CD8-positive, alpha-beta T cell (primary cell): ENCODE measurements at regions of chr14 and their contacts with region 1.

Region 1: GRCh38 chr14:21978184-21978998 is 304.8 kb upstream of the OR4E1 start:
- DNase-seq: peak in 8 of 9 experiments; percentile 26 to 78 (median 58)
- ATAC-seq: peak; percentile 79
- H3K4me3 ChIP-seq: peak overlapping the region in 1 of 2 experiments; percentile 15
- H3K4me3 Mint-ChIP-seq: peak overlapping the region; percentile 71
- H3K27ac ChIP-seq: no peak overlapping the region
- H3K27ac Mint-ChIP-seq: peak overlapping the region; percentile 72
- H3K4me1 ChIP-seq: peaks cover 3% of the 10 kb centered on the region
- H3K4me1 Mint-ChIP-seq: peaks cover 17% of the 10 kb centered on the region
- H3K27me3 ChIP-seq: no peaks in the 10 kb centered on the region
- H3K27me3 Mint-ChIP-seq: no peaks in the 10 kb centered on the region
- CTCF ChIP-seq: peak; percentile 74

Region 2: GRCh38 chr14:21924479-21924878 is 53.9 kb before region 1 on chr14:
- CTCF ChIA-PET with region 1: interaction called, 15 read pairs
- POLR2A ChIA-PET with region 1: interaction called, 9 read pairs
- intact Hi-C with region 1: loop called (anchors 5 kb)
- DNase-seq: peak; percentile 31 to 88 (median 69)
- ATAC-seq: peak; percentile 83
- H3K4me3 ChIP-seq: peak overlapping the region; percentile 16 to 33
- H3K4me3 Mint-ChIP-seq: peak overlapping the region; percentile 74
- H3K27ac ChIP-seq: peak overlapping the region; percentile 22 to 48
- H3K27ac Mint-ChIP-seq: peak overlapping the region; percentile 91
- H3K4me1 ChIP-seq: peaks cover 46% of the 10 kb centered on the region
- H3K4me1 Mint-ChIP-seq: peaks cover 58% of the 10 kb centered on the region
- H3K27me3 ChIP-seq: no peaks in the 10 kb centered on the region
- H3K27me3 Mint-ChIP-seq: no peaks in the 10 kb centered on the region
- CTCF ChIP-seq: peak; percentile 38

Region 3: DNA sequence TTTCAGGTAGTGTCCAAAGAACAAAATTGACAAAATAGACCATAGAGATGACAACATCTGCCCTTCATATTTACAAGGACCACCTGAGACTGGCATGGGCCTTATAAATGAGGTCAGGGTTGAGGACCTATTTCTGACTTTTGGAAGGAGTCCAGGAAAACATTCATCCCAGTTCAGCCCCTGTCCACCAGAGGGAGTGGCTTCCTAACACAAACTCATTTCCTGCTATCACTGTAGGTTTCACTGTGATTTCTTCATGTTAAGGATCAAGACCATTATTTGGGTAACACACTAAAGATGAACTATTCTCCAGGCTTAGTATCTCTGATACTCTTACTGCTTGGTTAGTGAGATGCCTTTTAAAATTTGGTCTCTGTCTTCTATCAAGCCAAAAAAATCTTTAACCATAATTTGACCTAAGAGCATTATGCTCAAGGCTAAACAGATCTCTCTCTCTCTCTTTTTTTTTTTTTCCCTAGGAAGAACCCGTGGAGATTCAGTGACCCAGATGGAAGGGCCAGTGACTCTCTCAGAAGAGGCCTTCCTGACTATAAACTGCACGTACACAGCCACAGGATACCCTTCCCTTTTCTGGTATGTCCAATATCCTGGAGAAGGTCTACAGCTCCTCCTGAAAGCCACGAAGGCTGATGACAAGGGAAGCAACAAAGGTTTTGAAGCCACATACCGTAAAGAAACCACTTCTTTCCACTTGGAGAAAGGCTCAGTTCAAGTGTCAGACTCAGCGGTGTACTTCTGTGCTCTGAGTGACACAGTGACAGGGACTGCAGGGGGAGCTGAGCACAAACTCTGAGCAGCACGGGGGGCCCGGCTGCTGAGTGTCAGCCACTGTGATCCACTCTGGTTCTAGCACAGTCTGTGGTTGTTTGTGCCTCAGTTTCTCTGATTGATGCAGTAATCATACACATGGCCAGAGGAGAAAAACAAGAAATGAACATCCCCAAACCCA is 37.2 kb before region 1 on chr14:
- CTCF ChIA-PET with region 1: interaction called, 5 read pairs
- POLR2A ChIA-PET with region 1: no interaction called
- intact Hi-C with region 1: loop called in 1 of 2 experiments (anchors 5 kb)
- DNase-seq: peak in 7 of 9 experiments; percentile 15 to 70 (median 43)
- ATAC-seq: peak; percentile 78
- H3K4me3 ChIP-seq: peak overlapping the region; percentile 7 to 26
- H3K4me3 Mint-ChIP-seq: peak overlapping the region; percentile 77
- H3K27ac ChIP-seq: no peak overlapping the region
- H3K27ac Mint-ChIP-seq: peak overlapping the region; percentile 84
- H3K4me1 ChIP-seq: peaks cover 18% of the 10 kb centered on the region
- H3K4me1 Mint-ChIP-seq: peaks cover 22% of the 10 kb centered on the region
- H3K27me3 ChIP-seq: no peaks in the 10 kb centered on the region
- H3K27me3 Mint-ChIP-seq: no peaks in the 10 kb centered on the region
- CTCF ChIP-seq: peak; percentile 45

Region 4: GRCh38 chr14:21965042-21965441 is 13.3 kb before region 1 on chr14:
- CTCF ChIA-PET with region 1: interaction called, 12 read pairs
- POLR2A ChIA-PET with region 1: interaction called, 9 read pairs
- intact Hi-C with region 1: no loop called
- DNase-seq: peak in 6 of 9 experiments; percentile 30 to 74 (median 58)
- ATAC-seq: peak; percentile 91
- H3K4me3 ChIP-seq: no peak overlapping the region
- H3K4me3 Mint-ChIP-seq: peak overlapping the region; percentile 4
- H3K27ac ChIP-seq: no peak overlapping the region
- H3K27ac Mint-ChIP-seq: peak overlapping the region; percentile 66
- H3K4me1 ChIP-seq: no peaks in the 10 kb centered on the region
- H3K4me1 Mint-ChIP-seq: peaks cover 25% of the 10 kb centered on the region
- H3K27me3 ChIP-seq: no peaks in the 10 kb centered on the region
- H3K27me3 Mint-ChIP-seq: peaks cover 2% of the 10 kb centered on the region
- CTCF ChIP-seq: no peak

Region 5: GRCh38 chr14:21997300-21997699 is 18.9 kb after region 1 on chr14:
- CTCF ChIA-PET with region 1: interaction called, 44 read pairs
- POLR2A ChIA-PET with region 1: no interaction called
- intact Hi-C with region 1: loop called in 1 of 2 experiments (anchors 2 kb)
- DNase-seq: peak in 5 of 9 experiments; percentile 24 to 77 (median 52)
- ATAC-seq: peak; percentile 91
- H3K4me3 ChIP-seq: peak overlapping the region; percentile 46 to 48
- H3K4me3 Mint-ChIP-seq: peak overlapping the region; percentile 86
- H3K27ac ChIP-seq: peak overlapping the region; percentile 24 to 36
- H3K27ac Mint-ChIP-seq: peak overlapping the region; percentile 95
- H3K4me1 ChIP-seq: peaks cover 7% of the 10 kb centered on the region
- H3K4me1 Mint-ChIP-seq: peaks cover 24% of the 10 kb centered on the region
- H3K27me3 ChIP-seq: no peaks in the 10 kb centered on the region
- H3K27me3 Mint-ChIP-seq: no peaks in the 10 kb centered on the region
- CTCF ChIP-seq: peak; percentile 27